ENCODE measurements at regions of chr1 and their contacts with region 1.

Region 1: DNA sequence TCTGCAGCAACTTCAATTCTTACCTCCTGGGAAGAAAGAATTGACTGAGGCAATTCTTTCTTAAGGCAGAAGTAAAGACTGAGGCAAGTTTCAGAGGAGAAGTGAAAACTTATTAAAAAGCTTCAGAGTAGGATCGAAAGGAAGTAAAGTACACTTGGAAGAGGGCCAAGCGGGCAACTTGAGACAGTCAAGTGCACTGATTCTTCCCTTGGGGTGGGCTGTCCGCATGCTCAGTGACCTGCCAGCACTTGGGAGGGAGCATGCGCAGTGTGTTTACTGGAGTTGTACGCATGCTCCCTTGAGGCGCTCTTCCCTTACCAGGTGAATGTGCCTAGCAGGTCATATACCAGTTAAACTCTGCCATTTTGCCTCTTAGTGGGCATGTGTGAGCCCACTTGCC is 55.3 kb upstream of the NBPF3 start:
- DNase-seq: no peak

Region 2: DNA sequence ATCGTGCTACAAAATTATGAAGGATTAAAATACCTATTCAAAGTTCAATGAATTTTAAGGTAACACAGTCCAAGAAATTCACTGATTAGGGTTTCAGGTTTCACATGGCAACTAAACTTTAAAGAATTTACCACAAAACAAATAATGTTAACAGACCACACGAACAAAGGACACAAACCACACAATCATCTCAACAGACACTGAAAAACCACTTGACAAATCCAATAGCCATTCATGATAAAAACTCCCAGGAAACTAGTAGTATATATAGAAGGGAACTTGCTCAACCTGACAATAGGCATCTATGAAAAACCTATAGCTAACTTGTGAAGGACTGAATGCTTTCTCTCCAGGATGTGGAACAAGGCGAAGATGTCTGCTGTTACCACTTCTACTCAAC is 631.0 kb before region 1 on chr1:
- intact Hi-C with region 1: no loop called
- DNase-seq: no peak

Region 3: DNA sequence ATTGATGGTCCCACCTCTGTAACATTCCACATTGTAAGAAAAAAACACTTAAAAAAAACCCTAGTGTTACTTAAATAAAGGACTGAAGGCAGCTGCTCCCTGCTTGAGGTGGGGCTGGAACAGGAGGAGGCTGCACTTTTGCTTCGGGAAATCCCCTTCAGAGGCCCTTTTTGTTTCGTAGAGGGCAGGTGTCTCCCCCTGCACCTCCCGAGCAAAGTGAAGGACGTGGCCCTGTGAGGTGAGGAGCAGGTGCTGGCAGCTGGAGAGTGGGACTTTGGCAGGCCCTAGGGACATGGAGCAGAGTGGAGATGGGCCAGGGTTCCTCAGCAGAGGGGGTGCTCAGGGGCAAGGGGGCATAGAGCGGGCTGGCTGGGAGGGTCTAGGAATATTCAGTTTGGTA is 791.6 kb after region 1 on chr1:
- intact Hi-C with region 1: loop called in 1 of 2 experiments (anchors 5 kb)
- DNase-seq: no peak